PC-9 (cell line): ENCODE measurements at regions of chr4 and their contacts with region 1.

Region 1: GRCh38 chr4:56575820-56576429 is 70.3 kb downstream of the ARL9 start:
- DNase-seq: no peak
- H3K4me3 ChIP-seq: no peak overlapping the region
- H3K27ac ChIP-seq: no peak overlapping the region
- H3K4me1 ChIP-seq: no peaks in the 10 kb centered on the region
- H3K27me3 ChIP-seq: no peaks in the 10 kb centered on the region
- CTCF ChIP-seq: peak; percentile 57

Region 2: DNA sequence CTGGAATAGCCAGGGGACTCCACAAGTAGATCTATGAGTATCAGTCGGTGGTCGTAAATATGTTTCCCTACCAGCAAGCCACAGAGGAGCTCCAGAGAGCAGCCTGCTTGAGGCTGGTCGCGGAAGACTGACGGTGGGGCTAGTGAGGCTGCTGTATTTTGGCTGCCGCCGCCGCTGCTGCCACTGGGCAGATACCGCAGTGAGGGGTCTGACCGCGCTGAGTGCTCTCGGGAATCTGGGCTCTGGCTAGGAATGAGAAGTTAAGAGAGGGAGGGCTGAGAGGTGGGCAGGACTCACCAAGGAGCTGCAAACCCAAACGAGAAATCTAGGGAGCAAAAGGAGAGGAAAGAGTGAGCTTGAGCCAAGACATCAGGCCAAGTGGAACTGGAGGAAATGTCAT is 756.3 kb before region 1 on chr4 and contains the start of gene EXOC1L:
- CTCF ChIA-PET with region 1: no interaction called
- POLR2A ChIA-PET with region 1: no interaction called
- intact Hi-C with region 1: no loop called
- DNase-seq: no peak
- H3K4me3 ChIP-seq: no peak within 1 kb of the TSS
- H3K27ac ChIP-seq: no peak within 1 kb of the TSS
- H3K4me1 ChIP-seq: no peaks in the 10 kb centered on the region
- H3K27me3 ChIP-seq: no peaks in the 10 kb centered on the region
- CTCF ChIP-seq: no peak
- total RNA-seq, gene EXOC1L: not detected in 2 replicates

Region 3: GRCh38 chr4:56668298-56668697 is 92.4 kb after region 1 on chr4:
- CTCF ChIA-PET with region 1: no interaction called
- POLR2A ChIA-PET with region 1: no interaction called
- intact Hi-C with region 1: loop called (anchors 5 kb)
- DNase-seq: peak in 1 of 2 experiments; percentile 5
- H3K4me3 ChIP-seq: no peak overlapping the region
- H3K27ac ChIP-seq: no peak overlapping the region
- H3K4me1 ChIP-seq: no peaks in the 10 kb centered on the region
- H3K27me3 ChIP-seq: no peaks in the 10 kb centered on the region
- CTCF ChIP-seq: peak; percentile 62